Left colon (tissue), 2 donors: ENCODE measurements at regions of chr1 and their contacts with region 1.

Region 1: GRCh38 chr1:28602536-28603439 is 10.7 kb downstream of the RAB42 start:
- DNase-seq: peak; percentile 35 to 66
- ATAC-seq: peak; percentile 76

Region 2: GRCh38 chr1:28518000-28518744 is 84.6 kb before region 1 on chr1:
- intact Hi-C with region 1: loop called (anchors 2 to 10 kb)
- DNase-seq: peak; percentile 89 to 91
- ATAC-seq: peak; percentile 89

Region 3: DNA sequence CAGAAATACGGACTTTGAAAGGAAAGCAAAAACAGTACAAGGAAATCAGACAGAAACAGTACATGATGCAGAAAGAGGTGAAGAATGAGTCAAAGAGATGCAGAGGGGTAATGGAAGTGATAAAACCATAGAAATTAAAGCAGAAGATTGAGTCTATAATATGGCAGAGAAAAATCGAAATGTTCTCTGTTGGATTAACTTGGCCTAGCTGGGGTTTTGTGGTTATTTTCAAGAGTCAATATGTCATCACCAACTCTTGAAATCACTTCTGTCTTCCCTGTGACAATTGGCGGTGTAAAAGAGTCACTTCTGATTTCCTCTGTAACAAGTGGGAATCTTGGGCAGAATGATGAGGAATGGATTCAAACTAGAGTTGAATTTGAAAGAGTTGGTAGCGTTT is 141.4 kb after region 1 on chr1:
- intact Hi-C with region 1: no loop called
- DNase-seq: no peak
- ATAC-seq: no peak